ENCODE measurements at regions of chr6 and their contacts with region 1.

Region 1: GRCh38 chr6:30678964-30679726 is 6.3 kb upstream of the DHX16 start:
- DNase-seq: peak; percentile 94
- ATAC-seq: peak; percentile 83
- H3K4me3 Mint-ChIP-seq: peak overlapping the region; percentile 61
- H3K27ac Mint-ChIP-seq: no peak overlapping the region
- H3K4me1 Mint-ChIP-seq: peaks cover 38% of the 10 kb centered on the region
- H3K27me3 Mint-ChIP-seq: no peaks in the 10 kb centered on the region
- CTCF ChIP-seq: peak; percentile 93

Region 2: DNA sequence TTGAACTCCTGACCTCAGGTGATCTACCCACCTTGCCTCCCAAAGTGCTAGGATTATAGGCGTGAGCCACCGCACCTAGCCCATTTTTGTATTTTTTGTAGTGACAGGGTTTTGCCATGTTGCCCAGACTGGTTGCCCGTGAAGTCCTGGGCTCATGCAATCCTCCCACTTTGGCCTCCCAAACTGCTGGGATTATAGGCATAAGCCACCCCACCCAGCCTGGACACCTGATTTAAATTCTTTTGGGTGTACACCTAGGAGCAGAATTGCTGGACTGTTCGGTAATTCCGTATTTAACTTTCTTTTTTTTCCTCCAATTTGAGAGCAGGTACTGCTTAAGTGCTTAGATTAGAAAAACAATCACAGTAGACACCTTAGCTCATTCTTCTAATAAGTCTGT is 17.3 kb after region 1 on chr6:
- CTCF ChIA-PET with region 1: interaction called, 49 read pairs
- POLR2A ChIA-PET with region 1: interaction called, 3 read pairs
- DNase-seq: no peak
- ATAC-seq: no peak
- H3K4me3 Mint-ChIP-seq: no peak overlapping the region
- H3K27ac Mint-ChIP-seq: no peak overlapping the region
- H3K4me1 Mint-ChIP-seq: peaks cover 11% of the 10 kb centered on the region
- H3K27me3 Mint-ChIP-seq: no peaks in the 10 kb centered on the region
- CTCF ChIP-seq: no peak

Region 3: DNA sequence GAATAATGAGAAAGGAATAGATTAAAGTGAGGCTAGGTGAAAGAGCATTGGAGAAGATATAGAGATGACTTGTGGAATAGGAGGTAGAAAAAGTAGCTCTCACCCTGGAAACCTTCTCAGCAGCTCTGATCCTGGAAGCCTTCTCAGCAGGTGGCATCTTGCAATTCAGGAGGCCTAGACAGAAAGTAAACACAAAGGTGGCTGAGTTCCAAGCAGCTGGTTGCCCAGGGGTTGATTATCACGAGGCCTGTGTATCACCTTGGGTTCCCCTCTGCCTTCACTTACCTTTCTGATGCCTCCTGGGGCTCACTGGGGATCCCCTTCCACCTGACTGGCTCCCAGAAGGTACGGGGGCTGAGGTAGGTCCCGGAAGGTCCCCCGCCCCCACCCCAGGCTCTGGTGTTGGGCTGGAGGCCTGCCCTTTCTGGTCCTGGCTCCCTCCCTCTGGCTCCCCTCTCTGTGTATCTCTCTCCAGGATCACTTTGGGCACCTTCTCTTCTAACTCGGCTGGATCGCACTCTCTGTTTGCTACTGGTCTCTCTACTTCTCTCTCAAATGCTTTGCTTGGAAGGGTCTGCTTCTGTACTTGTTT is 28.2 kb after region 1 on chr6:
- CTCF ChIA-PET with region 1: interaction called, 16 read pairs
- POLR2A ChIA-PET with region 1: no interaction called
- DNase-seq: no peak
- ATAC-seq: peak; percentile 51
- H3K4me3 Mint-ChIP-seq: no peak overlapping the region
- H3K27ac Mint-ChIP-seq: peak overlapping the region; percentile 47
- H3K4me1 Mint-ChIP-seq: peaks cover 14% of the 10 kb centered on the region
- H3K27me3 Mint-ChIP-seq: no peaks in the 10 kb centered on the region; the same call in 1 of the 2 replicates
- CTCF ChIP-seq: no peak

Region 4: GRCh38 chr6:30955367-30956042 is 276.4 kb after region 1 on chr6:
- CTCF ChIA-PET with region 1: no interaction called
- POLR2A ChIA-PET with region 1: no interaction called
- DNase-seq: peak; percentile 80
- ATAC-seq: peak; percentile 82
- H3K4me3 Mint-ChIP-seq: peak overlapping the region; percentile 64
- H3K27ac Mint-ChIP-seq: no peak overlapping the region
- H3K4me1 Mint-ChIP-seq: peaks cover 24% of the 10 kb centered on the region
- H3K27me3 Mint-ChIP-seq: peaks cover 69% of the 10 kb centered on the region
- CTCF ChIP-seq: no peak

Measured in WTC11 (cell line).